ENCODE measurements at regions of chr20 and their contacts with region 1.

Region 1: DNA sequence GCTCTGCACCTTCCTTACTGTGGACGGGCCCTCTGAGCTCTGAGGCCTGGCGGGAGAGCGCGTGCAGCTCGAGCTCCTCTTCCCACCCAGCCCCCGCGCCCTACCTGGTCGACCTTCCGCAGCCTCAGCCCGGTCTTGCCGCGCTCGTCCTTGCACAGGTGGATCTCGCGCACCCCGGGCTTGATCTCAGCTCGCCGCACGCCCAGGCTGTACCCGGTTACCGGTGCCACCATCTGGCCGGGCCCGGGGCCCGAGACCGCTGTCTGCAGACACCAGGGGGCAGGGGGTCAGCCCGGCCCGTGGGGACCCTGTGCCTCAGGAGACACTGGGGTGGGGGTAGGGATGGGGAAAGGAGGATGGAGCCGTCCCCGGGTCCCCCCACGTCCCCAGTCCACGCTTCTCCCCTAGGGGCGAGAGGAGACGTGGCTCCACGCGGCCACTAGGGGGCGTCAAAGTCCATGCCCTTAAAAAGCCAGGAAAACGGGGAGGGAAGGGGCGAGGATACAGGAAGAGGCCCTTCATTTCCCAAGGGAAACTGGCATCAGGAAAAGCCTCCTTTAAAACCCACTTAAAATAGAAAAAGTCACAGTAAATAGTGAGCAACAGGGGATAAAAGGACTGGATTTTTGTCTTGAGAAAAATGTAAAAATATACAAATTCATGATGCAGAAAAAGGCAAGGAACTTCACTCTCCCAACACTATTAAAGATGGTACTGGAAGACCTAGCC is 15.5 kb downstream of the SDCBP2 start:
- DNase-seq: no peak
- H3K4me3 ChIP-seq: peak overlapping the region in 2 of 4 donors; percentile 21 to 58
- H3K27ac ChIP-seq: peak overlapping the region in 1 of 4 donors; percentile 13
- H3K4me1 ChIP-seq: peaks cover 0 to 12% (median 7%) of the 10 kb centered on the region in 3 donors
- H3K27me3 ChIP-seq: no peaks in the 10 kb centered on the region
- CTCF ChIP-seq: peak; percentile 93 to 98 (median 95)
- POLR2A ChIP-seq: no peak

Region 2: DNA sequence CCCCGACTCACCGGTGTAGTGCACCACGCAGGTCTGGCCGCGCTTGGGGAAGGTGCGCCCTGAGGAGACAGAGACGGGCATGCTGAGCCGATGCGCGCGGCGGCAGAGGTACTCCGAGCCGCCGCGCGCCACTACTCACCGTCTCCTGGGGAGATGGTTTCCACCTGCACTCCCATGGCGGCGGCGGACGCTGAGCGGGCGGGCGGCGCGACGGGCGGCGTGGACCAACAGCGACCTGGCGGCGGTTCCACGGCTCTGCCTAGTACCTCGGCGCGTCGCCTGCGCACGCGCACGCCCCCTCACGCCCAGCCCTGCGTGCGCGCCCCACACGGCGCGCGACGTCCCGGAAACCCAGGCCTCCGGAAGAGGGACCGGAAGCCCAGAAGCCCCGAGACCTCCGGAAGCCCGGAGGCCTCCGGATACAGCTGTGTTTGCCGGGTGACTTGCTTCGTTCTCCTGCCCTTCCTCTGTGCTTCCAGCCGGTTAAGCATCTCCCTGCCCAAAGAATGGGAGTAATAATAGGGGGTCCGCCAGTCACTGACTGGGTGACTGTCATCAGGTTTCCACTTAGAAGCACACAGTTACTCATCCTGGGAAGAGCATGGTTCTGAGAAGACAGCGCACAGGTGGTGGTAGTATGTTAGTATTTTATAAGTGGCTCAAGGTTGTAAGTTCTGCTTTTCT is 79.6 kb after region 1 on chr20 and contains the start of gene FKBP1A:
- intact Hi-C with region 1: loop called (anchors 10 kb)
- DNase-seq: peak; percentile 64
- H3K4me3 ChIP-seq: peak within 1 kb of the TSS; percentile 62 to 97 (median 92)
- H3K27ac ChIP-seq: peak within 1 kb of the TSS; percentile 80 to 92 (median 91)
- H3K4me1 ChIP-seq: peaks cover 25 to 53% (median 41%) of the 10 kb centered on the region in 3 donors
- H3K27me3 ChIP-seq: peaks cover 0 to 29% (median 0%) of the 10 kb centered on the region in 4 donors
- CTCF ChIP-seq: peak in 5 of 6 experiments; percentile 10 to 44 (median 31)
- POLR2A ChIP-seq: peak in 3 of 4 donors; percentile 67 to 93 (median 82)
- total RNA-seq, gene FKBP1A: 76.2 to 132 (median 102) TPM

Region 3: GRCh38 chr20:1440024-1440423 is 126.6 kb after region 1 on chr20:
- intact Hi-C with region 1: loop called (anchors 5 kb)
- DNase-seq: no peak
- H3K4me3 ChIP-seq: no peak overlapping the region
- H3K27ac ChIP-seq: no peak overlapping the region
- H3K4me1 ChIP-seq: no peaks in the 10 kb centered on the region
- H3K27me3 ChIP-seq: no peaks in the 10 kb centered on the region
- CTCF ChIP-seq: peak in 1 of 6 experiments; percentile 41
- POLR2A ChIP-seq: no peak

Measured in esophagus squamous epithelium (tissue), 5 donors.